Endothelial cell of umbilical vein (primary cell): ENCODE measurements at regions of chr5 and their contacts with region 1.

Region 1: GRCh38 chr5:126941403-126941802 is 89.0 kb downstream of the MARCHF3 start:
- DNase-seq: no peak
- H3K4me3 ChIP-seq: no peak overlapping the region
- H3K27ac ChIP-seq: no peak overlapping the region
- H3K4me1 ChIP-seq: peaks cover 11% of the 10 kb centered on the region
- H3K27me3 ChIP-seq: no peaks in the 10 kb centered on the region
- CTCF ChIP-seq: no peak
- POLR2A ChIP-seq: no peak

Region 2: DNA sequence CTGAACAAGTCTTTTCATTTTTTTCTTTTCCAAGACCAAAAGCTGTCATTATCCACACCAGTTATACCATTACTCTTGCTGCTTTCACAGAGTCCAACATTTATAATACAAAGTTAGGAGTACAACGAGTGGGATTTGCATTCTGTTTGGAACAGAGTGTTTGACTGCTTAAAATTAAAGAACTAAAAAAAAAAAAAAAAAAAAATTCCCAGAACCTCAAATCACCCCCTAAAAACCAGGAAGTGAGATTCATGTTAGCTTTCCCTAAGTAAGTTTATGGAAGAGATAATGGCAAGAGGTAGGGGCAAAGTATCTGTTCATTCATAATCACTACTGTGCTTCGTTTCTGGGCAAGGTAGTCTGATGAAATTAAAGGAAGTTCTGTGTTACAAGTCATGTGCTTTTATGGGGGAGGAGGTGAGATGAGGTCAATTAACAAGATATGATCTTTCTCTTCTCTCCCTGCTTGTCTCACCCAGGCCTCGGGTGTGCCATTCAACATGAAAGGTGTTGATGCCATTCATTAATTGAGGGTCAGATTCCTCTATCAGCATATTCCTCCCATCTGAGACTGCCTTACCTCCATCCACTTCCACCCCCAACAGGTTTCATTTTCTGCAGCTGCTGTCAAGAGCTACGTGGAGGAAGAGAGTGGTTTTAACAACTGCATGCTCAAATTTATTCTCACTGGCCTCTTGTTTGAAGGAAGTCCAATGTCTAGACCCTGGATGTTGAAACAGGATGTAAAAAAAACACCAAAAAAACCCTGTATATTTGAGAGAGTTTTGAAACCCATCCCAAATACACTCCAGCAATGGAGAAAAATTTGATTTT is 30.9 kb after region 1 on chr5:
- CTCF ChIA-PET with region 1: interaction called, 12 read pairs
- POLR2A ChIA-PET with region 1: no interaction called
- dilution Hi-C with region 1: no loop called
- intact Hi-C with region 1: no loop called
- DNase-seq: peak; percentile 42
- H3K4me3 ChIP-seq: no peak overlapping the region
- H3K27ac ChIP-seq: no peak overlapping the region
- H3K4me1 ChIP-seq: peaks cover 27% of the 10 kb centered on the region
- H3K27me3 ChIP-seq: no peaks in the 10 kb centered on the region
- CTCF ChIP-seq: no peak
- POLR2A ChIP-seq: no peak